ENCODE measurements at regions of chr19 and their contacts with region 1.

Region 1: GRCh38 chr19:50357178-50358100 is 8.0 kb downstream of the NAPSA start:
- DNase-seq: peak; percentile 89
- ATAC-seq: peak; percentile 86
- H3K4me3 Mint-ChIP-seq: peak overlapping the region; percentile 86
- H3K27ac Mint-ChIP-seq: peak overlapping the region; percentile 95
- H3K4me1 Mint-ChIP-seq: peaks cover 47% of the 10 kb centered on the region
- H3K27me3 Mint-ChIP-seq: peaks cover 4% of the 10 kb centered on the region

Region 2: DNA sequence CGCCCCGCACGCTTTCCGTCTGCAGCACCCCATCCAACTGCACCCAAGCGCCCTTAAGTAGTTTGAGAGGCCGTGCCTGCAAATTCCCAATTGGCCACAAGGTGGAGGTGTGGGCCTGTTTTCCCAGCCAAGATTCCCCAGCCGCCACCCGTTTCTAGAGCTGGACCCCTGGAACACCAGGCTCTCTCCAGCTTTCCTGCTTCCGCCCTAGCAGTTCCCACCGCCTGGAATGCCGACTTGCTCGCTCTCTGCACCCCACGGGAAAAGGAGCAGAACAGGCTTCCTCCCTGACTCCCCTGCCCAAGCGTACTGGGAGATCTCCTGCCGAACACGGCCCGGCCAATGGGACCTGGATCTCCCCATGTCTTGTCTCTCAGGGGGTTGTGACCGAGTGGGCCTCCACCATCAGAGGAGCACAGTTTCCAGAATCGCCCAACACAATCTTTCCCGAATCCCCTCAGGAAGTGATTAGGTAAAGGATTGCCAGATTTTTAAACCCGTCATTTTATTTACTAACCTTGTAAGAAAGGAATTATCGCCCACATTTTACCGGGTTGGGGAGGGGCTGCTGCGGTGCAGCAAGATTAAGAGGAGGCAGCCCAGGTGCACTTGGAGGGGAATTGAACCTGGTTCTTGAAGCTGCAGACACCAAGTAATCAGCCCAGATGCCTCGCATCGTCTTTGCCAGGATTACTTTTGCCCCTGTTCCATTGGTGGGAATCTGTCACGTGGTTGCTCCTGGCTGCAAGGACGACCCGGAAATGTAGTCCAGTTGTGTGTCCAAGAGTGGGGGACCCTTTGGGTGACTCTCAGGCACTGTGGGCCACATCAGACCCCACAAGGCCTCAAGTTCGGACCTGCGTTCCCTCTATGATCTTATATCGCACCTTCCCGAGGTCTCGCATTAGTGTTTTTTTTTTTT is 11.5 kb after region 1 on chr19:
- CTCF ChIA-PET with region 1: interaction called, 17 read pairs
- POLR2A ChIA-PET with region 1: no interaction called
- DNase-seq: peak; percentile 83
- ATAC-seq: peak; percentile 72
- H3K4me3 Mint-ChIP-seq: peak overlapping the region; percentile 83
- H3K27ac Mint-ChIP-seq: peak overlapping the region; percentile 85
- H3K4me1 Mint-ChIP-seq: peaks cover 36% of the 10 kb centered on the region
- H3K27me3 Mint-ChIP-seq: no peaks in the 10 kb centered on the region

Region 3: GRCh38 chr19:50376166-50377050 is 19.0 kb after region 1 on chr19 and contains the start of gene NR1H2:
- CTCF ChIA-PET with region 1: interaction called, 19 read pairs
- POLR2A ChIA-PET with region 1: interaction called, 4 read pairs
- DNase-seq: peak; percentile 96
- ATAC-seq: peak; percentile 89
- H3K4me3 Mint-ChIP-seq: peak within 1 kb of the TSS; percentile 86
- H3K27ac Mint-ChIP-seq: peak within 1 kb of the TSS; percentile 98
- H3K4me1 Mint-ChIP-seq: peaks cover 23% of the 10 kb centered on the region
- H3K27me3 Mint-ChIP-seq: no peaks in the 10 kb centered on the region
- total RNA-seq, gene NR1H2: 56.4 to 64.1 TPM

Region 4: GRCh38 chr19:50414864-50415660 is 57.6 kb after region 1 on chr19:
- CTCF ChIA-PET with region 1: interaction called, 16 read pairs
- POLR2A ChIA-PET with region 1: no interaction called
- DNase-seq: peak; percentile 72
- ATAC-seq: peak; percentile 78
- H3K4me3 Mint-ChIP-seq: no peak overlapping the region
- H3K27ac Mint-ChIP-seq: peak overlapping the region; percentile 25
- H3K4me1 Mint-ChIP-seq: peaks cover 12% of the 10 kb centered on the region
- H3K27me3 Mint-ChIP-seq: peaks cover 8% of the 10 kb centered on the region

Region 5: GRCh38 chr19:50461066-50461875 is 103.8 kb after region 1 on chr19:
- CTCF ChIA-PET with region 1: interaction called, 27 read pairs
- POLR2A ChIA-PET with region 1: no interaction called
- DNase-seq: peak; percentile 76
- ATAC-seq: peak; percentile 84
- H3K4me3 Mint-ChIP-seq: no peak overlapping the region
- H3K27ac Mint-ChIP-seq: no peak overlapping the region
- H3K4me1 Mint-ChIP-seq: peaks cover 10% of the 10 kb centered on the region
- H3K27me3 Mint-ChIP-seq: peaks cover 9% of the 10 kb centered on the region

Measured in activated CD8-positive, alpha-beta T cell treated with anti-CD3 and anti-CD28 coated beads, Interleukin-2, amount 10 ng/mL, durations not matched to agents 7 days and 5 days (primary cell).